ENCODE measurements at regions of chr9 and their contacts with region 1.

Region 1: DNA sequence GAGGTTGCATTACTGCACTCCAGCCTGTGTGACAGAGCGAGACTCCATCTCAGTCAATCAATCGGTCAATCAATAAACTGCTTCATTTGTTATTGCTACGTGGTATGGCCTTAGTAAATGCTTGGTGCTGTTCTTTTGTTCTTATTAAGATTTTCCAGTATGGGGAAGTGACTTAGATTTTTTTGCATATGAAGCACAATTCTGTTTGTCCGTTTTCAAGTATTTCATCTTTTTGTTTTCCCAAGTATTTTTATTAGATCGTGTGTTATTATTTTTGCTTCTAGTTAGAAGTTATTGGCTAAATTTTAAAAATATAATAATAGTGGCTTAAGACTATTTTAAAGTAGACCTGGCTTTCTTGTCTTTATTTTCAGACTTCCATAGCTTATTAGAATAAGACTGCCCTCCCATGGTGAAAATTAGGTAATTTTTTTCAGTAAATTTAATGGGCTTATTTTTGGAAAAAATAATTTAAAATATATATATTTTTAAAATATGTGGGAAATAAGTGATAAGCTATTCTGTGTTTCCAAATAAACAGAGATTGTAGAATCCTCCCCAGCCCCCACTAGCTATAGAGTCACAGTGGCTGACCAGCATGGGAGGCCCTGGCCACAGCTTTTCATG is 14.7 kb upstream of the OMD start:
- DNase-seq: peak in 3 of 14 experiments; percentile 16 to 33 (median 19)
- ATAC-seq: no peak
- H3K4me3 ChIP-seq: no peak overlapping the region
- H3K4me3 Mint-ChIP-seq: no peak overlapping the region
- H3K27ac ChIP-seq: no peak overlapping the region
- H3K27ac Mint-ChIP-seq: no peak overlapping the region
- H3K4me1 ChIP-seq: no peaks in the 10 kb centered on the region
- H3K4me1 Mint-ChIP-seq: no peaks in the 10 kb centered on the region
- H3K27me3 ChIP-seq: no peaks in the 10 kb centered on the region
- H3K27me3 Mint-ChIP-seq: no peaks in the 10 kb centered on the region
- CTCF ChIP-seq: peak; percentile 34

Region 2: GRCh38 chr9:92140074-92140753 is 298.8 kb before region 1 on chr9:
- CTCF ChIA-PET with region 1: interaction called, 8 read pairs
- POLR2A ChIA-PET with region 1: no interaction called
- intact Hi-C with region 1: loop called (anchors 1 to 2 kb)
- DNase-seq: peak; percentile 49 to 80 (median 58)
- ATAC-seq: peak; percentile 73
- H3K4me3 ChIP-seq: peak overlapping the region; percentile 14
- H3K4me3 Mint-ChIP-seq: peak overlapping the region; percentile 80
- H3K27ac ChIP-seq: no peak overlapping the region
- H3K27ac Mint-ChIP-seq: no peak overlapping the region
- H3K4me1 ChIP-seq: peaks cover 14% of the 10 kb centered on the region
- H3K4me1 Mint-ChIP-seq: peaks cover 10% of the 10 kb centered on the region
- H3K27me3 ChIP-seq: peaks cover 21 to 22% of the 10 kb centered on the region in 2 experiments
- H3K27me3 Mint-ChIP-seq: peaks cover 57% of the 10 kb centered on the region
- CTCF ChIP-seq: peak; percentile 90

Region 3: DNA sequence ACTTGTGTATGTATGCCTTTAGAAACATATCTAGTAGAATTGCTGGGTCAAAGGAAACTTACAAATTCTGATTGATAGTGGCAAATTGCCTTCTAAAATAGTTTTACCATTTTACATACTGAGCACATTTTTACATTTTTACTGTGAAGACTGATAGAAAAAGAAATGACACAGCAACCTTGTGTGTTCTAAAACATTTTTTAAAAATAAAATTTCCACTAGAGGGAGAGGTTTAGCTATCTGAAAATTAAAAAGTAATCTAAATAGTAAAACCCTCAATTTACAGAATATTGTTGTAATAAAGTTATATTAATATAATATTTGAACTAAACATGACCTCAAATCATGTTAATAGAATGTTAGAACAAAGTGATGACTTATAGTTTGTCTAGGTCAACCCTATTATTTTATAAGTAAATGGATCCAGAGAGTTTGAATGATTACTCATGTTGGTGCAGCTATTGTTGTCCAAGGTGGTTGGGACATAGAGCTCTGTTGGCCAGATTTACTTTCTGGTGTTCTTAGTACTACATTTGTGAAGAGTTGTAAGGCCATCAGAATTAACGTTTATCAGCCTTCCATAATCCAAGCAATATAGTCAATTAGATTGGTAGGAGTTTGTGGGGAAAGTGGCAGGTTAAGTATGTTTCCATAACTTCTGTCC is 96.1 kb before region 1 on chr9:
- CTCF ChIA-PET with region 1: no interaction called
- POLR2A ChIA-PET with region 1: no interaction called
- intact Hi-C with region 1: loop called in 1 of 2 experiments (anchors 5 kb)
- DNase-seq: no peak
- ATAC-seq: no peak
- H3K4me3 ChIP-seq: no peak overlapping the region
- H3K4me3 Mint-ChIP-seq: no peak overlapping the region
- H3K27ac ChIP-seq: no peak overlapping the region
- H3K27ac Mint-ChIP-seq: no peak overlapping the region
- H3K4me1 ChIP-seq: no peaks in the 10 kb centered on the region
- H3K4me1 Mint-ChIP-seq: no peaks in the 10 kb centered on the region
- H3K27me3 ChIP-seq: no peaks in the 10 kb centered on the region
- H3K27me3 Mint-ChIP-seq: no peaks in the 10 kb centered on the region
- CTCF ChIP-seq: no peak